Transverse colon (tissue), 4 donors: ENCODE measurements at regions of chr17 and their contacts with region 1.

Region 1: GRCh38 chr17:80866147-80866793 is 125.4 kb upstream of the CHMP6 start:
- DNase-seq: peak; percentile 71
- H3K4me3 ChIP-seq: no peak overlapping the region
- H3K27ac ChIP-seq: no peak overlapping the region
- H3K4me1 ChIP-seq: peaks cover 0 to 6% (median 2%) of the 10 kb centered on the region in 4 donors
- H3K27me3 ChIP-seq: no peaks in the 10 kb centered on the region
- CTCF ChIP-seq: peak; percentile 65 to 75 (median 72)
- EP300 ChIP-seq: no peak
- POLR2A ChIP-seq: no peak

Region 2: GRCh38 chr17:80892019-80892855 is 26.0 kb after region 1 on chr17:
- in situ Hi-C with region 1: no loop called
- intact Hi-C with region 1: loop called (anchors 1 kb)
- DNase-seq: peak; percentile 23
- H3K4me3 ChIP-seq: no peak overlapping the region
- H3K27ac ChIP-seq: peak overlapping the region; percentile 58 to 79 (median 62)
- H3K4me1 ChIP-seq: peaks cover 0 to 15% (median 5%) of the 10 kb centered on the region in 4 donors
- H3K27me3 ChIP-seq: no peaks in the 10 kb centered on the region
- CTCF ChIP-seq: no peak
- EP300 ChIP-seq: no peak
- POLR2A ChIP-seq: no peak

Region 3: DNA sequence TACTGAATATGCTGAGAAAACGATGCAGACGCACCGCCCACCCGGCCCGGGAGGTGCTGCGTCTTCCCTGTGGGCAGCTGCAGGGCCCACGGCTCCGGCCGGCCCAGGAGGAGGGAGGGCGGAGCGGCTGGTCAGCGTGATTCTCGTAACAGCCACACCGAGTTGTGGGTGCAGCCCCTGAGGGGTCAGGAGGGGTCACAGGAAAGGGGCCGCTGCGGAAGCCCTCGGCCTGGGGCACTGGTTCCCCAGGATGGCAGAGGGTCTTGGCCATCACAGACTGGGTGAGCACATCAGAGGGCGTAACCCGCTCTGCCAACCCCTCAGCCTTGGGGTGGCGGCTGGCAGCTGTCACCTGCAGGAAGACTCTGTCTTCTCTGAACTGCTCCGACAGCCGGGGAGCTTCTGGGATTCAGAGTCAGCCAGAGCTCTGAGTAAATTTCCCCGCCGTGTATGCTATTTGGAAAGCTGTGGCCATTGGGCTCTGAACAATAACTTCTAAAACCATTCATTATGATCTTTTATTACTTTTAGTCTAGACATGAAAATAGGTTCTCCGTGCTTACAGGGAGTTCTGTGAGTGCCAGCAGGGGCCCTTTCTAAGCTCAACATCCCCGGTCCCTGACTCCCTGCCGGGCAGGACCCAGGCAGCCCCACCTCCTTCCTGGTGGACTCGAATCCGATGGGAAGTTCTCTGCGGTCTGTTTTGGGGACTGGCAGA is 37.9 kb after region 1 on chr17:
- in situ Hi-C with region 1: no loop called
- intact Hi-C with region 1: no loop called
- DNase-seq: no peak
- H3K4me3 ChIP-seq: no peak overlapping the region
- H3K27ac ChIP-seq: no peak overlapping the region
- H3K4me1 ChIP-seq: peaks cover 0 to 12% (median 0%) of the 10 kb centered on the region in 4 donors
- H3K27me3 ChIP-seq: no peaks in the 10 kb centered on the region
- CTCF ChIP-seq: no peak
- EP300 ChIP-seq: no peak
- POLR2A ChIP-seq: no peak

Region 4: GRCh38 chr17:80970044-80970761 is 103.9 kb after region 1 on chr17:
- in situ Hi-C with region 1: loop called in 1 of 4 experiments (anchors 10 kb)
- intact Hi-C with region 1: no loop called
- DNase-seq: peak; percentile 50
- H3K4me3 ChIP-seq: no peak overlapping the region
- H3K27ac ChIP-seq: no peak overlapping the region
- H3K4me1 ChIP-seq: peaks cover 0 to 32% (median 14%) of the 10 kb centered on the region in 4 donors
- H3K27me3 ChIP-seq: peaks cover 31% of the 10 kb centered on the region
- CTCF ChIP-seq: peak; percentile 35 to 60 (median 46)
- EP300 ChIP-seq: no peak
- POLR2A ChIP-seq: no peak

Region 5: DNA sequence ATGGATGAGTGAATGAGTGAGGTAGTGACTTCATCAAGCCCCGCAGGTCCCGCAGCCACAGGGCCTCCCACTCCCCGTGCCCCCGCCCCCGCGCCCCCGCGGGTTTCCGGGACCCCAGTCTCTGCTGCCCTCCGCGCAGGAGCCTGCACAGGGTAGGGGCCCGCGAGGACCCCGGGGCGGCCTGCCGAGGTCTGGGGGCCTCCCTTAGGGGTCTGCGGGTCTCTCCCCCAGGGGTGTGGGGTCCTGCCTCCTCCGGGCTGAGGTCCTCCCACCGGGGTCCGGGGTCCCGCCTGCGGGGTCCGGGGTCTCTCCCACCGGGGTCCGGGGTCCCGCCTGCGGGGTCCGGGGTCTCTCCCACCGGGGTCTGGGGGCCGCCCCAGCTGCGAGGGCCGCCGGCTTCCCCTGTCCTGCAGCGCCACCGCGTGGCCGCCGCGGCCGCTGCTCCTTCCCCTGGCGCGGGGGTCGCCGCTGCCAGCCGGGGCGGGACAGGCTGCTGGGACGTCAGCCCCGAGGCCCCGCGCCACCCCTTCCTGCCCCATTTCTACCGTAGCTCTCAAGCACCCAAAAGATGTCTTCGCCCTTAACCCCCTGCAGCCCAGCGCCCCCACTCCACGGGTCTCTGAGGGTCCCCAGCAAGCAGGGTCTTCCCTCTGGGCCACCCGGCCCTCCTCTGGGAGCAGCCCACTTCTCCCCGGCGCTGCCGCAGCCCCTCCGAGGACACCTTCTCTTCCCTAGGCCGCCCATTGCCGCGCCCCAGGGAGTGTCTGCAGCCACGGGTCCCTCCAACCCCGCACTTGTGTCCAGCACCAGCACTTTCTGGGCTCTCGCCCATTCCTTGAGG is 115.0 kb after region 1 on chr17:
- in situ Hi-C with region 1: loop called in 1 of 4 experiments (anchors 10 kb)
- intact Hi-C with region 1: loop called (anchors 5 kb)
- DNase-seq: no peak
- H3K4me3 ChIP-seq: peak overlapping the region in 2 of 4 donors; percentile 14 to 34
- H3K27ac ChIP-seq: no peak overlapping the region
- H3K4me1 ChIP-seq: peaks cover 3 to 10% (median 9%) of the 10 kb centered on the region in 4 donors
- H3K27me3 ChIP-seq: peaks cover 16% of the 10 kb centered on the region
- CTCF ChIP-seq: peak; percentile 28 to 84 (median 77)
- EP300 ChIP-seq: no peak
- POLR2A ChIP-seq: no peak